ENCODE measurements at regions of chr12 and their contacts with region 1.

Region 1: GRCh38 chr12:31749024-31749704 is 20.3 kb upstream of the AMN1 start:
- DNase-seq: peak; percentile 81
- ATAC-seq: peak; percentile 92
- H3K4me3 Mint-ChIP-seq: peak overlapping the region; percentile 9
- H3K27ac Mint-ChIP-seq: peak overlapping the region; percentile 28
- H3K4me1 Mint-ChIP-seq: peaks cover 55% of the 10 kb centered on the region
- H3K27me3 Mint-ChIP-seq: no peaks in the 10 kb centered on the region

Region 2: GRCh38 chr12:30308011-30308705 is 1441.0 kb before region 1 on chr12:
- CTCF ChIA-PET with region 1: no interaction called
- POLR2A ChIA-PET with region 1: no interaction called
- intact Hi-C with region 1: no loop called
- DNase-seq: no peak
- ATAC-seq: no peak
- H3K4me3 Mint-ChIP-seq: no peak overlapping the region
- H3K27ac Mint-ChIP-seq: no peak overlapping the region
- H3K4me1 Mint-ChIP-seq: no peaks in the 10 kb centered on the region
- H3K27me3 Mint-ChIP-seq: no peaks in the 10 kb centered on the region

Region 3: GRCh38 chr12:31456562-31456961 is 292.6 kb before region 1 on chr12:
- CTCF ChIA-PET with region 1: no interaction called
- POLR2A ChIA-PET with region 1: no interaction called
- intact Hi-C with region 1: no loop called
- DNase-seq: no peak
- ATAC-seq: no peak
- H3K4me3 Mint-ChIP-seq: no peak overlapping the region
- H3K27ac Mint-ChIP-seq: no peak overlapping the region
- H3K4me1 Mint-ChIP-seq: no peaks in the 10 kb centered on the region
- H3K27me3 Mint-ChIP-seq: peaks cover 2% of the 10 kb centered on the region

Region 4: DNA sequence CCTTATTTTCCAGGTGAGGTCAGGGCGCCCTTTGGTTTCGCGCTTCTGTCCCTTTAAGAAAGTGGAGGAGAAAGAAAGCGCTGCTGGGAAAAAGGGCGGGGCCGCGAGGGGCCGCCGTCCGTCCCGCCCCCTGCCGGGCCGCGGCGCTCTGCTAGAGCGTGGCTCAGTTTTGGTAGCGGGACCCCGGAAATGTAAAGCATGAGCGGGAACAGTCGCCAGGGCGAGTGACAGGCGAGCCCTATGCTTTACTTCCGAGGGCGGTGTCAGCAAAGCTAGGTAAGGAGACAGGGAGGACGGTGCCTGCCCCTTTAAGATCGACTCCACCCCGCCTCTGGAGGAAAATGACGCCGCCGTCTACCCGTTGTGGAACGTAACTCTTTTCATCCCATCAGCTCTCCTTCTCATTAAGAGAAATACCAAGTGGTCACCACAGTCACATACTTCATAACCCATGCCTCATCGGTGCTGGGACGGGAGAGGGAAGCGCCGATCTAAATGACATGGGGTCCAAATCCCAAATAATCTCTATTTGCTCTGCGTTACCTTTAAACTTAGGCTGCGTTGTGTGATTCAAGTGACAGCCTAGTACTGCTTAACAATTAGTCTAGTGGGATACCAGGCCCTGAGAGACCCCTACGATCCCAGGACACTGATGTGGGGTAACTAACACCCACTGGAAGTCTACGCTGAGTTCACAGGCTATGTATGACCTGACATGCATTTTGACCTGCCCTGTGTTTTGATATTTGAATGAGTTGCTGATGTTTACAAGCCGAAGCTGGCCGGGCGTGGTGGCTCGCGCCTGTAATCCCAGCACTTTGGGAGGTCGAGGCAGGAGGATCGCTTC is 89.9 kb before region 1 on chr12 and contains the start of gene ETFBKMT:
- CTCF ChIA-PET with region 1: no interaction called
- POLR2A ChIA-PET with region 1: no interaction called
- intact Hi-C with region 1: loop called in 1 of 2 experiments (anchors 1 kb)
- DNase-seq: peak; percentile 96
- ATAC-seq: peak; percentile 99
- H3K4me3 Mint-ChIP-seq: peak within 1 kb of the TSS; percentile 87
- H3K27ac Mint-ChIP-seq: peak within 1 kb of the TSS; percentile 100
- H3K4me1 Mint-ChIP-seq: peaks cover 13% of the 10 kb centered on the region
- H3K27me3 Mint-ChIP-seq: no peaks in the 10 kb centered on the region
- total RNA-seq, gene ETFBKMT: 0.35 to 1.4 TPM

Region 5: GRCh38 chr12:31728917-31729640 is 20.1 kb before region 1 on chr12 and contains the start of gene AMN1:
- CTCF ChIA-PET with region 1: interaction called, 6 read pairs
- POLR2A ChIA-PET with region 1: interaction called, 7 read pairs
- intact Hi-C with region 1: loop called (anchors 1 kb)
- DNase-seq: peak; percentile 99
- ATAC-seq: peak; percentile 92
- H3K4me3 Mint-ChIP-seq: peak within 1 kb of the TSS; percentile 89
- H3K27ac Mint-ChIP-seq: peak within 1 kb of the TSS; percentile 99
- H3K4me1 Mint-ChIP-seq: peaks cover 52% of the 10 kb centered on the region
- H3K27me3 Mint-ChIP-seq: no peaks in the 10 kb centered on the region
- total RNA-seq, gene AMN1: 5.1 to 5.8 TPM

Region 6: GRCh38 chr12:31797230-31797872 is 48.2 kb after region 1 on chr12:
- CTCF ChIA-PET with region 1: no interaction called
- POLR2A ChIA-PET with region 1: no interaction called
- intact Hi-C with region 1: loop called in 1 of 2 experiments (anchors 5 kb)
- DNase-seq: peak; percentile 23
- ATAC-seq: peak; percentile 74
- H3K4me3 Mint-ChIP-seq: no peak overlapping the region
- H3K27ac Mint-ChIP-seq: peak overlapping the region; percentile 58
- H3K4me1 Mint-ChIP-seq: peaks cover 29% of the 10 kb centered on the region
- H3K27me3 Mint-ChIP-seq: no peaks in the 10 kb centered on the region

Region 7: DNA sequence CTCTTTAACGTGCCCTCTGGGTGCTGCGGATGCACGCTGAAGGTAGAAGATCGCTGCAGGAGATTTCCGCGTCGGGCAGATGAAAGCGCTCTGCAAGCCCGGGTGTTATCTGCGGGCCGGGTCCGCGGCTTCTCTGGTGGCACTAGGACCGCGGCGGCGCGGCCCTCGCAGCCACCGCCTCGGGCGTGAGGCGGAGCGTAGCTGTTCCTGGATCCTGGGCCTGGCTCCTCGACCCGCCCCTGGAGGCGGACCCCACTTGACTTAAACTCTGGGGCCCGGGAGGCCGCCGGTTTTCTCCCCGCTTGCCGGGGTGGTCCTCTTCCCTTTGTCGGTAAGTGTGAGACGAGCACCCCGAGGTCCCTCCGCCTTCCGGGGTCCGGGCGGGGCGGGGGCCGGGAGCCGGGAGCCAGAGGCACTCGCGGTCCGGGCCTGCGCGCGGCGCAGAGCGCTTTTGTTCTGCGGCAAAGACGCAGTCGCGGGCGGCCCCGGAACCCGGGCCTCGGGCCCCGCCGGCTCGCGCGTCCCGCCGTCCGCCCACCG is 210.1 kb after region 1 on chr12 and contains the start of gene RESF1:
- CTCF ChIA-PET with region 1: no interaction called
- POLR2A ChIA-PET with region 1: no interaction called
- intact Hi-C with region 1: loop called in 1 of 2 experiments (anchors 5 kb)
- DNase-seq: peak; percentile 90
- ATAC-seq: peak; percentile 83
- H3K4me3 Mint-ChIP-seq: peak within 1 kb of the TSS; percentile 89
- H3K27ac Mint-ChIP-seq: peak within 1 kb of the TSS; percentile 97
- H3K4me1 Mint-ChIP-seq: peaks cover 72% of the 10 kb centered on the region
- H3K27me3 Mint-ChIP-seq: no peaks in the 10 kb centered on the region
- total RNA-seq, gene RESF1: 52.0 to 78.8 TPM

Region 8: DNA sequence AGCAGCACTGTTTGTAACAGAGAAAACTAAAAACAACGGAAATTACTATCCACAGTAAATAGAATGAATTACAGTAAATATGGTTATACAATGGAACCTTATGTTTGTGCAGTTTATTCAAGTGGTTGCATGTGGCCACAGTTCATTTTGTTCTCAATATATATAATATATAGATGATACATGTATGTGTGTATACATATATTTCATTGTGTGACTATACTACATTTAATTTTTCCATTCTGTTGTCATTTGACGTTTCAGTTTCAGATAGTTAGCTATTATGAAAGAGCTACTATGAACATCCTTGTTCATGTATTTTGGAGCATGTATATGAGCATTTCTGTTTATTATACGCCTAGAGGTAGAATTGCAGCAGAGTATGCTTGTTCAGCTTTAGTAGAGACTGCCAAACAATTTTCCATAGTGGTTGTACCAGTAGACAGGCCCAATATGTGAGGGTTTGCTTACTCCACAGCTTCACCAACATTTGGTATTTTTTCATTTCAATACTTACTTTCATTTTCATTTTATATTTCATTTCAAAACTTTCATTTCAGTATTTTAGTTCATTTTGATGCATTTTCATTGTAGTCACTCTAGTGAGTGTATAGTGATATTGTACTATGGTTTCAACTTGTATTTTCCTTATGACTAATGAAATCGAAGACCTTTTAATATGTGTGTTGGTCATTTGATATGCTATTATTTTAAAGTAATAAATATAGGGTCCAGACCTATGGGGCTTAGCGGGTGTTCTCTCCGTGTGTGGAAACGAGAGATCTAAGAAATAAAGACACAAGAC is 508.7 kb after region 1 on chr12:
- CTCF ChIA-PET with region 1: no interaction called
- POLR2A ChIA-PET with region 1: no interaction called
- intact Hi-C with region 1: loop called (anchors 1 to 5 kb)
- DNase-seq: no peak
- ATAC-seq: peak; percentile 81
- H3K4me3 Mint-ChIP-seq: no peak overlapping the region
- H3K27ac Mint-ChIP-seq: peak overlapping the region; percentile 66
- H3K4me1 Mint-ChIP-seq: peaks cover 15% of the 10 kb centered on the region
- H3K27me3 Mint-ChIP-seq: no peaks in the 10 kb centered on the region

Region 9: DNA sequence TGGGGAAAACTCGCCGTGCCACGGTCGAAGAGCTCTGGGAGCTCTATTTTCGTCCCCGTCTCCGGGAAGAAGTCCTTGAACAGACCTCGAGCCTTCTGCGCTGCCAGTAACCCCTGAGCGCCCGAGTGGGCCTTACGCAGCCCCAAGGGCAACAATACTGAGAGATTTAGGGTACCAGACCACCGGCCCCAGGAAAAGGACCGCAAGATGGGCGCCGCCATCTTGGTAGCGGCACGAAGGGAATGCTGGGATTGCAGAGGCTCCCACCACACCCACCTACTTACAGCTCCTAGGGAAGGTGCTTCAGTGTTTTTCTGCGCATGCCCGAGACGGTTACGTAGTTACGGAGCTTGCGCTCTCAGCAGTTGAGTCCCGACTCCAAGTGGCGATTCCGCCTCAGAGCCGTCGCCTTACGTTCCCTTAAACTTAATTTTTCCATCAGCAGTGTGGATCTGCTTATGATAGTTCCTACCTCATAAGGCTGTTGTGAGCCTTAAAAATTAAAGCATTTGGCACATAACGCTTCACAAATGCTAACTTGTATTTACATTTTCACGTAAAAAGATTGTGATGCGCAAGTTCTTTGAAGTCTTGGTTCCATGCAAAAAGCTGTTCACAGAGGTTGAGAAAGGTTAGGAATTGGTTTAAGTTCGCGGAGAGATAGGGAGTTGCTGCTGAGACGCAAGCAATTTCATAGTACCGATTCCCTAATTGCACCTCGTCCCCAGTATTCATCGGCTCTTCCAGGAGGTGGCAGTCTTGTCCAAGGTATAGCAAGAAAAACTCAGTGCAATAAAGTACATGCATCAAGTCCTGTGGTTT is 1006.7 kb after region 1 on chr12 and contains the start of gene YARS2:
- CTCF ChIA-PET with region 1: no interaction called
- POLR2A ChIA-PET with region 1: no interaction called
- intact Hi-C with region 1: loop called in 1 of 2 experiments (anchors 10 kb)
- DNase-seq: peak; percentile 92
- ATAC-seq: peak; percentile 92
- H3K4me3 Mint-ChIP-seq: peak within 1 kb of the TSS; percentile 88
- H3K27ac Mint-ChIP-seq: peak within 1 kb of the TSS; percentile 95
- H3K4me1 Mint-ChIP-seq: peaks cover 20% of the 10 kb centered on the region
- H3K27me3 Mint-ChIP-seq: no peaks in the 10 kb centered on the region
- total RNA-seq, gene YARS2: 33.0 to 45.9 TPM

Measured in activated CD4-positive, alpha-beta T cell treated with anti-CD3 and anti-CD28 coated beads for 36 hours (primary cell).